HEK293 (cell line): ENCODE measurements at regions of chr19 and their contacts with region 1.

Region 1: DNA sequence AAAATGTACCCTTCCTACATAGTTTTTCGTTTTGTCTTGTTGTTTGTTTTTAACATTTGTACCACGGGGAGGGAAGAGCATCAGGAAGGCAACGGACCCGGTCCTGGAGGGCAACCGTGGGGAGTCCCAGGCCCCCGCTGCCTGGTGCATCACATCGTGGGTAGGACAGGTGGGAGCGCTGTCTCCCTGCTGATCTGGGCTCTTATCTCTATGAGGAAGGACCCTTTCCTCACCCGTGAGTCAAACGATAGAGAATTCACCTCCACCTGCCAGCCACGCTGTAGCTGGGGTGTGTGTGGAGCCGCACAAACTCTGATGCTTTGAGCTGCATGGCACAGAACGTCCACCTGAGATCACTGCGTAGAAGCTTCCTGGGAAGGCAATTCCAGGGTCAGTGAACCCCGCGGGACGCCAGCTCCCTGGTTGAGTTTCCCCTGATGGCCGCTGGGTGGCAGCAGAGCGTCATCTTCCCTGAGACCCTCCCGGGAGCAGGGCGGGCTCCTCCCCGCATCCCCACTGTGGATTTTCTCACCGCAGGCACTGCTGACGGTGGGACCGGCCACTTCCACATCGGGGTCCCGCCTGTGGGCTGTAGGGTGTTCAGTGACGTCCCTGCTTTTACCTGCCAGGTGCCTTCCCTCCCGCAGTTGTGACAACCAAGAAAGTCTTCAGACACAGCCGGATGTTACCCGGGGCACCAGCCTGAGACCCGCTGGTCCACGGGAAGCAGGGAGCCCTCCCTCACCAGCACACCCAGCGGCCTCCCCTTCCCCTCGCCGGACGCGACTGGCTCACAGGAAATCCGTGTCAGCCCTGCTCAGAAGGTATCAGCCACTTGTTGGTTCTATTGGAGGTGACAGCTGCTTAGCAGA is 54.7 kb downstream of the ZNF787 start:
- H3K4me3 ChIP-seq: peak overlapping the region; percentile 37
- H3K27ac ChIP-seq: no peak overlapping the region
- H3K4me1 ChIP-seq: no peaks in the 10 kb centered on the region
- CTCF ChIP-seq: peak; percentile 73

Region 2: GRCh38 chr19:56053596-56053995 is 12.8 kb before region 1 on chr19:
- CTCF ChIA-PET with region 1: interaction called, 12 read pairs
- POLR2A ChIA-PET with region 1: no interaction called
- H3K4me3 ChIP-seq: no peak overlapping the region
- H3K27ac ChIP-seq: no peak overlapping the region
- H3K4me1 ChIP-seq: no peaks in the 10 kb centered on the region
- CTCF ChIP-seq: no peak

Region 3: DNA sequence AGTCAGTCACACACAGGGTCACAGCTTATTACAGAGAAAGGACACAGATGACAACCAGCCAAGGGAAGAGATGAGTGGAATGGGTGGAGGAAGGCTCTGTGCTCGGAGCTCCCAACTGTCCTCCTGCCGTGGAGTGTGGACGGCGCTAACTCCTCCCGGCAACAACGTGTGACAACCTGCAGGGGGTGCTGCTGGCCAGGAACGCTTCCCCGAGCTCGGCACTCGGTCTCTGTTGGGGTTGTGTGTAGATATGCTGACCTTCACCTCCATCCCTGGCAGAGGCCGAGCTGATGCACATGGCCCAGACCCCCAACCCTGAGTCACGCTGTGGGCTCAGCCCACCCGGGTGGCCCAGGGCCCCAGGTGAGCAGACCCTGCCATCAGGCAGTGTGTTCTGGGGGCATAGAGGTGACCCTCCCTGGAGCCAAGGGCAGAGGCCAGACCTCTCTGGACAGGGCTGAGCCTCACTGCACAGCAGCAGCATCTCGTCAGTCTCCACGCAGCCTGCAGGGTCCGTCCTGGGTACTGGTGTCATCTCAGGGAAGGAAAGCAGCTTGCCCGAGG is 88.8 kb after region 1 on chr19:
- CTCF ChIA-PET with region 1: interaction called, 10 read pairs
- POLR2A ChIA-PET with region 1: no interaction called
- H3K4me3 ChIP-seq: no peak overlapping the region
- H3K27ac ChIP-seq: no peak overlapping the region
- H3K4me1 ChIP-seq: no peaks in the 10 kb centered on the region
- CTCF ChIP-seq: no peak

Region 4: DNA sequence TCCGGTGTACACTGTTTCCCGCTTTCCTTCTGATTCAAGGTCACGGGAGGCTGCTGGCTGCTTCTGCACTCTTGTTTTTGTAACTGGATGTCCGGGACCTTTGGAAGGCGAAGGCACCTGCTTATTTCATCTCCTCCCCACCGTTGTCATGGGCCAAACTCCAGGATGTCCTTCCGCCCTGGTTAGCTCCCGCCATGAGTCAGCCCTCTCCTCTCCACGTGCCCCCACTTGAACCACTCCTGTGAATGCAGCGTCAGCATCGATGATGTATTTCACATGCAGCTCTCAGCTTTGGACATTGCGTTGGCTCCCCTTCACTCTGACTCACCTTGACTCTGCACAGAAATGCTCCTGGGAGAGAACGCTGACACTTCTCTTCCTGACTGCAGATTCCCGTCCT is 103.9 kb after region 1 on chr19:
- CTCF ChIA-PET with region 1: interaction called, 17 read pairs
- POLR2A ChIA-PET with region 1: no interaction called
- H3K4me3 ChIP-seq: no peak overlapping the region
- H3K27ac ChIP-seq: no peak overlapping the region
- H3K4me1 ChIP-seq: no peaks in the 10 kb centered on the region
- CTCF ChIP-seq: no peak

Region 5: GRCh38 chr19:56333505-56333904 is 267.1 kb after region 1 on chr19:
- CTCF ChIA-PET with region 1: interaction called, 67 read pairs
- POLR2A ChIA-PET with region 1: interaction called, 3 read pairs
- H3K4me3 ChIP-seq: no peak overlapping the region
- H3K27ac ChIP-seq: no peak overlapping the region
- H3K4me1 ChIP-seq: no peaks in the 10 kb centered on the region
- CTCF ChIP-seq: no peak